GM12878 (cell line): ENCODE measurements at regions of chr6 and their contacts with region 1.

Region 1: GRCh38 chr6:21256197-21256596 is 337.4 kb upstream of the SOX4 start:
- DNase-seq: no peak
- ATAC-seq: no peak
- H3K4me3 ChIP-seq: no peak overlapping the region
- H3K27ac ChIP-seq: no peak overlapping the region
- H3K4me1 ChIP-seq: no peaks in the 10 kb centered on the region
- H3K27me3 ChIP-seq: no peaks in the 10 kb centered on the region
- CTCF ChIP-seq: no peak
- EP300 ChIP-seq: no peak
- POLR2A ChIP-seq: no peak
- RAD21 ChIP-seq: no peak

Region 2: DNA sequence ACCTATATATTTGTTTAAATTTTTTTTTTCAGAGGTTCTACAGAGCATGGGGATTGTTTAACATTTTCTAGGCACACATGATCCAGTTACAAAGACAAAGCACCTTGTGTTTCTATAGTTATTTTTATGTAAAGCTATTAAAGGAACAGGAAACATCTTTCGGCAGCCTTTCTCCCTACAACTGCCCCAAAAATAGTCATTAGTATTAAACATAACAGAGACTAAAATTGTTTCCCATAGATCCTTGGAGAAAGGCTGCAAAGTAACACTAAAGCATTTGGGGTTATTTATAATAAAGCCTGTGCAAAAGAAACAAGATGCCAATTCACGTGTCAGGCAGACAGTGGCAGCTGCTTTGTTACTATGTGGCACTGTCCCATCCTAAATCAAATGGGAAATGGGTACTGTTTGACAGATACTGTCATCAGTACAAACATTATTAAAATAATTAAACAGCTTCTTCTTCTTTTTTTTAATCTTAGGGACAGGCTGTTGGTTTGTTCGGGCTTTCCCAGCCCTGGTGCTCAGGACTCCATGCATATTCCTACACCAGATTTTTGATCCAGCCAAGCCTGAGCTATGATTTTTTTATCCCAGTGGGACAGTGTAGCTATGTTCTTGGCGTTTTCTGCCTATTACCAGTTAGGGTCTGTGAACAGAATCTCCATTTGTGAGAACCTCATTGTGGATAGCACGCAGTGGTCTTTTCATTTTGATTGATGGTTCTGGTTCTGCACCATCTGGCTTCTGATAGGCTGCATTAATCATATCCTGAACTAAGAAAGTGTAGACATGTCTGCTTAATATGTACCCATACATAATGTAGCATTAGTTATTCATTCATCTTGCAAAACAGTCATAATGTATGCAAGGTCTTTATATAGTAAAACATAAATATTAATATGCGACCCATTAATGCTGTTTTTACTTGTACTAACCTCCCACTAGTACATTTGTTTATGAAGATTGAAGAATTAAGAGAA is 123.0 kb before region 1 on chr6:
- CTCF ChIA-PET with region 1: no interaction called
- POLR2A ChIA-PET with region 1: interaction called, 17 read pairs
- RAD21 ChIA-PET with region 1: no interaction called
- SMC1A ChIA-PET with region 1: interaction called, 3 read pairs
- in situ Hi-C with region 1: no loop called
- intact Hi-C with region 1: no loop called
- DNase-seq: no peak
- ATAC-seq: no peak
- H3K4me3 ChIP-seq: no peak overlapping the region
- H3K27ac ChIP-seq: no peak overlapping the region
- H3K4me1 ChIP-seq: no peaks in the 10 kb centered on the region
- H3K27me3 ChIP-seq: no peaks in the 10 kb centered on the region
- CTCF ChIP-seq: no peak
- EP300 ChIP-seq: no peak
- POLR2A ChIP-seq: no peak
- RAD21 ChIP-seq: no peak

Region 3: GRCh38 chr6:21342501-21342900 is 86.3 kb after region 1 on chr6:
- CTCF ChIA-PET with region 1: no interaction called
- POLR2A ChIA-PET with region 1: no interaction called
- RAD21 ChIA-PET with region 1: no interaction called
- SMC1A ChIA-PET with region 1: no interaction called
- in situ Hi-C with region 1: no loop called
- intact Hi-C with region 1: no loop called
- DNase-seq: no peak
- ATAC-seq: no peak
- H3K4me3 ChIP-seq: no peak overlapping the region
- H3K27ac ChIP-seq: no peak overlapping the region
- H3K4me1 ChIP-seq: no peaks in the 10 kb centered on the region
- H3K27me3 ChIP-seq: no peaks in the 10 kb centered on the region
- CTCF ChIP-seq: no peak
- EP300 ChIP-seq: no peak
- POLR2A ChIP-seq: no peak
- RAD21 ChIP-seq: no peak